Endothelial cell of umbilical vein (primary cell): ENCODE measurements at regions of chr1 and their contacts with region 1.

Region 1: DNA sequence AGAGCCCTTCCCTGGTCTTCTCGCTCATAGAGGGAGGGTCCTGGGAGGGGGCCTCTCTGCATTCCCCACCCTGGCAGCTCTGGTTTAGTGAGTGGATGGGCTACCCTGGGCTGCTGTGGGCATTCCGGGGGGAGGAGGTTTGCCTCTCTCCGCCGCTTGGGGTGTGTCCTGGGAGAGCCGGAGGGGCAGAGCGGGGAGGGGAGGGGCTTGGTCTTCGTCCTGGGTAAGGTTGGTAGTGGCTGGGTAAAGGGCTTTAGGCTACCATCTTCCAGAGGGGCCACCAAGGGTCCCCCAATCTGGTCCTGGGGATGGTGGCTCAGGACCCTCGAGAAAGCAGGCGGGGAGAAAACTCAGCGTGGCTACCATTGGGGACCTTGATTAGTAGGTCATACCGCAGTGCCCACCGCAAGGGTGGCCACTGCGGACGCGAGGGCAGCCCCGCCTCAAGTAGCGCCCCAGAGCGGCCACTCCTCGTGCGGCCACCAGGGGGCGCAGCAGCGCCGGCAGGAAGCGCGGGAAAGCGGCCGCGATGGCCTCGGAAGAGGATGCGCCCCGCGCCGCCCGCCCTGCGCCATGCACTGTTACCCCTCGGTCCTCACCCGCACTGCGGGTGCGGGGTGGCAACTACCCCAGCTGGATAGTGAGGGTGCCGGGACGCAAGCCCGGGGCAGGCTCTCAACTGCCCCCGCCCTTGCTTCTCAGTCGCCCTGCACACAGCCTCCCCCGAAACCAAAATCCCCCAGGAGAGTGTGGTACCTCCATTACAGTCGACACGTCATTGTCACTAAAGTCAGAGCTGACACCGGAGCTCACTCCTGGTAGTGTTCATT is 44.1 kb upstream of the SLC25A33 start:
- DNase-seq: peak; percentile 42
- H3K4me3 ChIP-seq: peak overlapping the region in 2 of 3 experiments; percentile 15 to 22
- H3K27ac ChIP-seq: no peak overlapping the region
- H3K4me1 ChIP-seq: no peaks in the 10 kb centered on the region
- H3K27me3 ChIP-seq: peaks cover 0 to 4% of the 10 kb centered on the region in 2 experiments
- CTCF ChIP-seq: peak; percentile 92 to 97
- POLR2A ChIP-seq: no peak

Region 2: DNA sequence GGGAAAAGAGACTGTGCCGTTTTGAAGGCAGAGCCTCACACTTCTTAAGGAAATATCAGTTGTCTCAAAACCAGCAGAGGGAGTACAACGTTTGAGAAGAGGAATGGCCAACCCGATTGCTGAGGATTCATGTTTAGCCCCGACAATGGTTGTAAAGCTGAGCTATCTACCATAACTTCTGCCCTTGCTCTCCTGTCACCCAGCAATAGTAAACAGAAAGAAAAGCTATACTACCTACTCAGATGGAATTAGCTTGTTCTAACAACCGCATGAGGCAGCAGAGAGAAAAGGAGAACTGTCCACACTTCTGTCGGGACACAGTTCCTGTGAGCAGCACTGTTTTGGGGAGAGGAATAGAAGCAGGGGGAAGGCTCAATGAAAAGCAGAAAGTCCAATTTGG is 1086.0 kb before region 1 on chr1:
- CTCF ChIA-PET with region 1: no interaction called
- POLR2A ChIA-PET with region 1: no interaction called
- dilution Hi-C with region 1: no loop called
- intact Hi-C with region 1: no loop called
- DNase-seq: peak; percentile 76
- H3K4me3 ChIP-seq: no peak overlapping the region
- H3K27ac ChIP-seq: peak overlapping the region; percentile 62
- H3K4me1 ChIP-seq: peaks cover 53% of the 10 kb centered on the region
- H3K27me3 ChIP-seq: no peaks in the 10 kb centered on the region
- CTCF ChIP-seq: peak; percentile 37 to 42
- POLR2A ChIP-seq: no peak

Region 3: DNA sequence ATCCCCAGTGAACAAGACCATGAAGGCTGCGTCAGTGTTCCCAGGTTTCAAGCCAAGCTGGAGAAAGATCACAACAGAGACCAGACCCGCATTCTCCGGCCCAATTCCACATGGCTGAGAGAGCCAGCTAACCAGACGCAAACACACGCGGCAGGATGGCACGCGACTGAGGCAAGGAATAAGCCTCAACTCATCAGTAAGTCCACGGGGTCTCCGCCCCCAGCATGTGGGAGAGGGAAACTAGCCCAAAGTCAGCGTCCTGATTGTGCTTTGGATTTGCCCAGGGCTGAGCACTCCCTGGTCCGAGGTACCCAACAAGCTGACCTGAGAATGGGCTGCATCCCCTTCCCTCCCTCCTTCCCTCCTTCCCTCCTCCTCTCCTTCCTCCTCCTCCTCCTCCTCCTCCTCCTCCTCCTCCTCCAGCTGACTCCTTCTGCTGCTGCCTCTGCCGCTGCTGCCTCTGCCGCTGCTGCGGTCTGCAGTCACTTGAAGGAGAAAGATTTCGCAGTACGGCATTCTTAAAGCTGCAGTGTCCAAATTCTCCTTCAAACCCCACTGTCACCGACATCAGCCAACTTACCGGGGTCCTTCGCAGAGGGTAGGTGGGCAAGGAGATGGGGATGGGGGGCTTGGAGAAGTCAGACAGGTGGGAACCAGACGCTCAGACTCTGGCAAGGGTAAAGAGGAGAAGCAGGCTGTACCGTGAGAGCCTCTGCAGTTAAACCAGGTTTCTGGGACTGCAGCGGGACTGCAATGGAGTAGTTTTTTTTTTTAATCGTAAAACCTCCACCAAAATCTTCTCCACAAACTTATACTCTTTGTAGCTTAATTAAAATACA is 293.5 kb before region 1 on chr1:
- CTCF ChIA-PET with region 1: interaction called, 5 read pairs
- POLR2A ChIA-PET with region 1: interaction called, 3 read pairs
- dilution Hi-C with region 1: no loop called
- intact Hi-C with region 1: loop called (anchors 5 kb)
- DNase-seq: peak; percentile 48
- H3K4me3 ChIP-seq: peak overlapping the region; percentile 32 to 60 (median 54)
- H3K27ac ChIP-seq: no peak overlapping the region
- H3K4me1 ChIP-seq: peaks cover 16% of the 10 kb centered on the region
- H3K27me3 ChIP-seq: peaks cover 21 to 23% of the 10 kb centered on the region in 2 experiments
- CTCF ChIP-seq: no peak
- POLR2A ChIP-seq: no peak

Region 4: DNA sequence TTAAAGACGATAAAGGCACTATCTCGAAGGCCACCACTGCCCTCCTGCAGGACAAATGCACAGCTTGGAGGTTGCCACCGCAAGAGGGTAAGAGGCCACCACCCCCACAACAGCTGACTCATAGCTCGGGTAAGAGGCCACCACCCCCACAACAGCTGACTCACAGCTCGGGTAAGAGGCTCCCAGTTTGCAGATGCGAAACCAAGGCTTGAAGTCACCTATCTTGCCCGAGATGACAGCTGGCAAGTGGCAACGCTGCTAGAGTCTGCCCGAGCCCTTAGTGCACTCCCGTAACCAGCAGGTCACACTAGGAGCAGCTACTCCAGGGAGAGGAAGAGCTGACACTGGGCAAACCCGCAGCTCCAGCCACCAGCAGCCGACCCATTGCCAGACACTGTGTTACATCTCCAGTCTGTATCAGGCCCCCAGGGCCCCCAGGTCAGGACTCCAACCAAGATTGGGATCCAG is 219.5 kb before region 1 on chr1:
- CTCF ChIA-PET with region 1: interaction called, 232 read pairs
- POLR2A ChIA-PET with region 1: no interaction called
- dilution Hi-C with region 1: no loop called
- intact Hi-C with region 1: no loop called
- DNase-seq: peak; percentile 63
- H3K4me3 ChIP-seq: no peak overlapping the region
- H3K27ac ChIP-seq: no peak overlapping the region
- H3K4me1 ChIP-seq: peaks cover 13% of the 10 kb centered on the region
- H3K27me3 ChIP-seq: no peaks in the 10 kb centered on the region
- CTCF ChIP-seq: no peak
- POLR2A ChIP-seq: no peak

Region 5: GRCh38 chr1:9448132-9449105 is 46.7 kb before region 1 on chr1:
- CTCF ChIA-PET with region 1: no interaction called
- POLR2A ChIA-PET with region 1: no interaction called
- dilution Hi-C with region 1: no loop called
- intact Hi-C with region 1: no loop called
- DNase-seq: peak; percentile 36
- H3K4me3 ChIP-seq: no peak overlapping the region
- H3K27ac ChIP-seq: no peak overlapping the region
- H3K4me1 ChIP-seq: peaks cover 4% of the 10 kb centered on the region
- H3K27me3 ChIP-seq: no peaks in the 10 kb centered on the region
- CTCF ChIP-seq: peak; percentile 6 to 26
- POLR2A ChIP-seq: no peak

Region 6: DNA sequence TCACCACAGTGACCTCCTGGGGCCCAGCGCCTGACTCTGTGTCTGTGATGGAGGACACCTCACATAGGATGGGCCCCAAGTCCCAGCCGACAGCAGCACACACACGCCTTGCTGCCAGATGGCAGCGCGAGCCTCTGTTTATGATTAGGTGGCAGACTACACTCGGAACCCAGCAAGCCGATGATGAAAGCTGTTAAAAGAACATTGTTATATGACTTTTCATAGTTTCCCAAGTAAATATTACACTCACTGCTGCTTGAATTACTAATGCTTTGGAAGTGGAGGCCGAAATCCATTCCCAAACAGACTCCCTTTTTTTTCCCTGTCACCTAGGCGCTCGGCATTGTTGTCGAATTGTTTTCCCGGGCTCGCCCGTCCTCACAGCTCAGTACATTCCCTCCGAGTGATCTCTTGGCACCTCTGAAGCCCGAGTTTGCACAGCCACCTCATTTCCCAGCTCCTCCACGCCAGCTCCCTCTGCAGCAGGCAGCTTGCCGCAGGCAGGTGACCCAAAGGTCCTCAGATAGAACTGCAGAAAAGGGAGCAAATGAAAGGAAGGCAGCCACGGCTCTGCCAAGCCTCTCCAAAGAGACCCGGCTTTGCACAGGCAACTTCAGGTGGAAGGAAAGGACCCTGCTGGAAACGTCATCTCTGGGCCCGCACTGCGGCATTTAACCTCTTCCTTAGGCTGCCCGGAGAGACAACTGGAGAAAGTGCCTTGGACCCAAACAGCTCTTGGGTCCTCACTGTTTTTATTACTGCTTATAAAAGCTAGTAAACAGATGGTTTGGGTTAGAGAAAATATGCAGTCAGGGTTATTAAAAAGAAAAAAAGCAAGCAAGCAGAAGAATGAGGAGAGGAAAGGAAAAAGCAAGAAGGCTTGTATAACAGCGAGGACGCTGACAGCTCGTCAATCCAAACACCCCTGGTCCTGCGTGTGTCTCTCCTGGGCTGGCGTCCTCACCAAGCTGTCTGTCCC is 28.1 kb before region 1 on chr1:
- CTCF ChIA-PET with region 1: interaction called, 11 read pairs
- POLR2A ChIA-PET with region 1: no interaction called
- dilution Hi-C with region 1: no loop called
- intact Hi-C with region 1: no loop called
- DNase-seq: no peak
- H3K4me3 ChIP-seq: no peak overlapping the region
- H3K27ac ChIP-seq: no peak overlapping the region
- H3K4me1 ChIP-seq: no peaks in the 10 kb centered on the region
- H3K27me3 ChIP-seq: peaks cover 0 to 5% of the 10 kb centered on the region in 2 experiments
- CTCF ChIP-seq: no peak
- POLR2A ChIP-seq: no peak

Region 7: DNA sequence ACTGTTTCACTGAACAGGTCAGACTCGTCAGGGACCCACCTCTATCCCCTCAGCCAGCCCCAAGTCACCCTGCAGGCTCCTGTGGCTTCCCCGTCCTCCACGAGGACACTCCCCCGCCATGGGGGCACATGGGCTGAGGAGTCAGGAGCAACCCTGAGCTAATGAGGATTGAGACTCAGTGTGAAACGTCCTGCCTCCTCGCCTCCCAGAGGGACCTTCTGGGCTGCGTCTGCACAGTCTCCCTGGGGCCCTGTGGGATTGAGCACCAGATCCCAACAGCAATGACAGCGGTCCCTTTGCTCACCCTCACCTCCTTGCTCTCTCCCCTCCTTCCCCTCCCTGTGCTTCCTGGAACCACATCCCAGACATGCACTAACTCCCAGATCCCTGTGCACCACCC is 25.3 kb after region 1 on chr1:
- CTCF ChIA-PET with region 1: no interaction called
- POLR2A ChIA-PET with region 1: no interaction called
- dilution Hi-C with region 1: no loop called
- intact Hi-C with region 1: no loop called
- DNase-seq: no peak
- H3K4me3 ChIP-seq: no peak overlapping the region
- H3K27ac ChIP-seq: no peak overlapping the region
- H3K4me1 ChIP-seq: no peaks in the 10 kb centered on the region
- H3K27me3 ChIP-seq: peaks cover 0 to 1% of the 10 kb centered on the region in 2 experiments
- CTCF ChIP-seq: no peak
- POLR2A ChIP-seq: no peak

Region 8: GRCh38 chr1:9573723-9574122 is 78.6 kb after region 1 on chr1:
- CTCF ChIA-PET with region 1: interaction called, 103 read pairs
- POLR2A ChIA-PET with region 1: no interaction called
- dilution Hi-C with region 1: no loop called
- intact Hi-C with region 1: loop called (anchors 1 kb)
- DNase-seq: no peak
- H3K4me3 ChIP-seq: no peak overlapping the region
- H3K27ac ChIP-seq: no peak overlapping the region
- H3K4me1 ChIP-seq: no peaks in the 10 kb centered on the region
- H3K27me3 ChIP-seq: no peaks in the 10 kb centered on the region
- CTCF ChIP-seq: peak; percentile 15 to 22
- POLR2A ChIP-seq: no peak